Cardiac septum (tissue), 1 donor: ENCODE measurements at regions of chr3 and their contacts with region 1.

Region 1: GRCh38 chr3:19946832-19947548 is at the start of gene RAB5A:
- DNase-seq: peak; percentile 99
- total RNA-seq, gene RAB5A: 66.0 TPM

Region 2: GRCh38 chr3:19885468-19885867 is 61.5 kb before region 1 on chr3:
- intact Hi-C with region 1: loop called (anchors 5 kb)
- DNase-seq: no peak